Activated naive CD4-positive, alpha-beta T cell treated with anti-CD3 and anti-CD28 coated beads for 36 hours (primary cell): ENCODE measurements at regions of chr7 and their contacts with region 1.

Region 1: GRCh38 chr7:76359111-76359978 is 554 bp upstream of the YWHAG start:
- DNase-seq: peak; percentile 99
- H3K4me3 Mint-ChIP-seq: peak overlapping the region; percentile 91
- H3K27ac Mint-ChIP-seq: peak overlapping the region; percentile 94
- H3K4me1 Mint-ChIP-seq: peaks cover 42% of the 10 kb centered on the region
- H3K27me3 Mint-ChIP-seq: no peaks in the 10 kb centered on the region

Region 2: GRCh38 chr7:76047811-76048667 is 311.3 kb before region 1 on chr7 and contains the starts of genes MDH2 and STYXL1:
- CTCF ChIA-PET with region 1: no interaction called
- intact Hi-C with region 1: loop called (anchors 5 kb)
- DNase-seq: peak; percentile 95
- H3K4me3 Mint-ChIP-seq: peak within 1 kb of the TSS; percentile 98
- H3K27ac Mint-ChIP-seq: peak within 1 kb of the TSS; percentile 96
- H3K4me1 Mint-ChIP-seq: peaks cover 54% of the 10 kb centered on the region
- H3K27me3 Mint-ChIP-seq: no peaks in the 10 kb centered on the region
- total RNA-seq, gene MDH2: 325 TPM
- total RNA-seq, gene STYXL1: 27.6 to 28.1 TPM

Region 3: GRCh38 chr7:76216381-76217082 is 142.8 kb before region 1 on chr7:
- CTCF ChIA-PET with region 1: no interaction called
- intact Hi-C with region 1: no loop called
- DNase-seq: no peak
- H3K4me3 Mint-ChIP-seq: no peak overlapping the region
- H3K27ac Mint-ChIP-seq: no peak overlapping the region
- H3K4me1 Mint-ChIP-seq: no peaks in the 10 kb centered on the region
- H3K27me3 Mint-ChIP-seq: peaks cover 10% of the 10 kb centered on the region

Region 4: DNA sequence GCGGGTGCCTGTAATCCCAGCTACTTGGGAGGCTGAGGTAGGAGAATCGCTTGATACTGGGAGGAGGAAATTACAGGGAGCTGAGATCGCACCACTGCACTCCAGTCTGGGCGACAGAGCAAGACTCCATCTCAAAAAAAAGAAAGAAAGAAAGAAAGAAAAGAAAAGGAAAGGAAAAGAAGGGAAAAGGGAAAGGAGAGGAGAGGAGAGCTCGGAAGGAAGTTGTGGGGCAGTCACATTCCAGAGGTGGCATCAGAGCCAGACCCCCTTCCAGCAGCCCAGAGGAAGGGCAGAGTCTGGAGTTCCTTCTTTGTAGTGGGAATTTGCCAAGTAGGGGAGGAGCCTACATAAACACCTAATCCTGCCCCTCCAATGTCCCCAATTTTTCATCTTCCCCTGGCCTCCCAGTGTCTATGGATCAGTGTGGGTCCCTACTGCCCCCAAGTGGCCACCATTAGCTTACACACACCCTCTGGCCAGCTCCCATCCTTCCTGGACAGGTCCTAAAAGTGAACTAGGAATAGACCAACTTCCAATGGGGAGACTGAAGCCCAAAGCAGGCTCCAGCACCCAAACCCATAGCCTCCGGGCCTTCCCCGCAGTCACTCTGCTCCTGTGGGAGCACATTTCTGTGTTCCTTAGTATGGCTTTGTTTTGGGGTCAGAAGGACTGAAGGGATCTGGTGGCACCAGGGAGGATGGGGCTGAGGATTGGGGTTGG is 96.5 kb before region 1 on chr7:
- CTCF ChIA-PET with region 1: interaction called, 3 read pairs
- intact Hi-C with region 1: loop called (anchors 5 kb)
- DNase-seq: peak; percentile 60
- H3K4me3 Mint-ChIP-seq: no peak overlapping the region
- H3K27ac Mint-ChIP-seq: no peak overlapping the region
- H3K4me1 Mint-ChIP-seq: peaks cover 4% of the 10 kb centered on the region
- H3K27me3 Mint-ChIP-seq: peaks cover 21% of the 10 kb centered on the region

Region 5: GRCh38 chr7:76343294-76343930 is 15.9 kb before region 1 on chr7:
- CTCF ChIA-PET with region 1: no interaction called
- intact Hi-C with region 1: loop called (anchors 1 kb)
- DNase-seq: peak; percentile 43
- H3K4me3 Mint-ChIP-seq: no peak overlapping the region
- H3K27ac Mint-ChIP-seq: peak overlapping the region; percentile 48
- H3K4me1 Mint-ChIP-seq: peaks cover 82% of the 10 kb centered on the region
- H3K27me3 Mint-ChIP-seq: no peaks in the 10 kb centered on the region

Region 6: DNA sequence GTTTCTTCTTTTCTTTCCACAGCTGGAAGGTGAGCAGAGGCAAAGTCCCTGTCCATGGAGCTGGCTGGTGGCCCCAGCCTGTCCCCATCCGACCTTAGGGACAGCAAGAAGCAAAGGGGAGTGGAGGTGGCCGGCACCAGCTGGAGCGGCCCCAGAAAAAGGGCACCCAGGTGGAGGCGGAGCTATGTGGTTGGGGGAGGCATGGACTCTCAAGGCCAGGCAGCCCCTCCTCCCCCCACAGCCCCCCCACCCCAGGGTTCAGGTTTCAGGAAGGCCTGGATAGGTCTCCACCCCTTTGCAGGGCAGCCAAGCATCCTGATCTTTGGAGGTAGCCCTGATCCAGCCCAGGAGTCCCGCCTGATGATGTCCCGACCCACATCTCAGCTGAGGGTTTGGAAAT is 50.2 kb after region 1 on chr7 and contains the start of gene SSC4D:
- CTCF ChIA-PET with region 1: no interaction called
- intact Hi-C with region 1: no loop called
- DNase-seq: no peak
- H3K4me3 Mint-ChIP-seq: no peak within 1 kb of the TSS
- H3K27ac Mint-ChIP-seq: no peak within 1 kb of the TSS
- H3K4me1 Mint-ChIP-seq: no peaks in the 10 kb centered on the region
- H3K27me3 Mint-ChIP-seq: no peaks in the 10 kb centered on the region
- total RNA-seq, gene SSC4D: 0.57 to 0.62 TPM